KBM-7 (cell line): ENCODE measurements at regions of chr5 and their contacts with region 1.

Region 1: GRCh38 chr5:172714491-172715421 is 56.2 kb downstream of the DUSP1 start:
- DNase-seq: peak; percentile 75

Region 2: GRCh38 chr5:172564188-172564587 is 150.6 kb before region 1 on chr5:
- in situ Hi-C with region 1: no loop called
- DNase-seq: no peak

Region 3: DNA sequence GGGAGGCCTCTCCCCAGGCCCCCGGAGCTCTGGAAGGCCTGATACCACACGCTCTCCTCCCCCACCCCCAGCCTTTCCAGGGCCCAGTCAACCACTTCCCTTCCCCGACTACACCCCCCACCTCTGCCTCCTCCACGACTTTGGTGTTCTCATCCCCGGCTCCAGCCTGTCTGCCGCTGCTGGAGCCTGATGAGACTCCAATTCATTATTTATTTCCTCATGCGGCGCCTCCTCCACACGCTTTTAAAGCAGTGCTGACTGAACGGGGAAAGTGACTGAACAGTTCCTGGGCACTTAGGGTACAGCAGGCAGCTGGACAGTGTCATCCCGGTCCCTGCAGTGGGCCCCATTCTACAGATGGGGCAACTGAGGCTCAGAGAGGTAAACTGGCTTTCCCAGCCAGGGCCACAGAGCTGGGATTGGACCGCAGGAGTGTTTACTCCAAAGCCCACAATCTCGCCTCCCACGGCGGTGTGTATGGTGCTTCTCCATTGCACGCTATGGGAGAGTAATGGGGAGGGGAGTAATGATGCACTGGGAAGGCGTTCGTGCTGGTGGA is 228.6 kb after region 1 on chr5:
- in situ Hi-C with region 1: no loop called
- DNase-seq: peak; percentile 92

Region 4: GRCh38 chr5:173293817-173294672 is 579.3 kb after region 1 on chr5:
- in situ Hi-C with region 1: loop called (anchors 25 kb)
- DNase-seq: peak; percentile 87